Naive thymus-derived CD4-positive, alpha-beta T cell (primary cell): ENCODE measurements at regions of chr3 and their contacts with region 1.

Region 1: GRCh38 chr3:190617185-190617584 is 103.3 kb downstream of the IL1RAP start:
- DNase-seq: peak in 1 of 9 donors; percentile 43
- ATAC-seq: peak; percentile 86
- H3K4me3 ChIP-seq: no peak overlapping the region
- H3K4me3 Mint-ChIP-seq: peak overlapping the region in 1 of 10 donors; percentile 78
- H3K27ac ChIP-seq: no peak overlapping the region
- H3K27ac Mint-ChIP-seq: peak overlapping the region in 1 of 9 donors; percentile 94
- H3K4me1 ChIP-seq: peaks cover 0 to 4% of the 10 kb centered on the region in 2 donors
- H3K4me1 Mint-ChIP-seq: peaks cover 26 to 81% (median 31%) of the 10 kb centered on the region in 7 donors
- H3K27me3 ChIP-seq: no peaks in the 10 kb centered on the region
- H3K27me3 Mint-ChIP-seq: no peaks in the 10 kb centered on the region

Region 2: GRCh38 chr3:190566043-190566933 is 50.9 kb before region 1 on chr3:
- CTCF ChIA-PET with region 1: no interaction called
- POLR2A ChIA-PET with region 1: no interaction called
- intact Hi-C with region 1: loop called in 1 of 2 experiments (anchors 1 kb)
- DNase-seq: peak in 2 of 9 donors; percentile 9 to 73
- ATAC-seq: peak; percentile 89
- H3K4me3 ChIP-seq: no peak overlapping the region
- H3K4me3 Mint-ChIP-seq: peak overlapping the region in 1 of 10 donors; percentile 65
- H3K27ac ChIP-seq: no peak overlapping the region
- H3K27ac Mint-ChIP-seq: peak overlapping the region in 1 of 9 donors; percentile 78
- H3K4me1 ChIP-seq: no peaks in the 10 kb centered on the region
- H3K4me1 Mint-ChIP-seq: peaks cover 0 to 58% (median 0%) of the 10 kb centered on the region in 7 donors
- H3K27me3 ChIP-seq: no peaks in the 10 kb centered on the region
- H3K27me3 Mint-ChIP-seq: no peaks in the 10 kb centered on the region

Region 3: DNA sequence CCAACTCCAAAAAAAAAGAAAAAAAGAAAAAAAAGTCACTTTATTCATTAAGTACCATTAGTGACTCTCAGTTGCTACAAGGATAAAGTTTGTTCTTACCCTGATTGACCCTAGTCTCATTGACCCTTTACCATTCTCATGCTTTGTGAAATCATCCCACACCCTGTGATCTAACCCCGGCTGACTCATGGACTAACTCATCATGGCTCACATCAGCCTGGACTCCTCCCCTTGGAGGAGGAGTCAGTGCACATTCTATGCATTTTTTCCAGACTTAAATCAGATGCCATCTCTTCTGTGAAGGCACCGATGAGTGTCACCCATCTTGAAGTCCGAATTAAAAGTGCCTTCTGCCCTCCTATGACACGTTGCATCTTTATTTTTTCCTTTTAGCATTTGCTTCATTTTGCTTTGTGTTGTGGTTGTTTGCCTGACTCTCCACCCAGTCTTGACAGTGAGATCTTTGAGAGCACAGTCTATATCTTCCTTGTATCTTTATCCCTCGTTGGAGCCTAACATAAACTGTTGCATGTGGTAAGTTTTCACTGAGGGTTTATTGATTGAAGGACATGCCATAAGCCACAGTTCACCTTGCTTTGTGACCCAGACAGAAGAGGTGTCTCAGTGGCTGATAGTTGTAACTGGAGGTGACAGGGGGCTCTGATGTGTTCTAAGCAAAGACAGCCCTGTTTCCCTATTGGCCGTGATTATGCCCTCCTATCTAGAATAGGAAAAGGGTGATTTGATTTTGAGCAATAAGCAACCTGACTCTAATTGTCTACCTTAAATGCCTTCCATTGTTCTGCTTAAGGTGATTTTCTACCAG is 31.2 kb before region 1 on chr3:
- CTCF ChIA-PET with region 1: no interaction called
- POLR2A ChIA-PET with region 1: no interaction called
- intact Hi-C with region 1: loop called in 1 of 2 experiments (anchors 1 kb)
- DNase-seq: peak in 1 of 9 donors; percentile 56
- ATAC-seq: peak; percentile 88
- H3K4me3 ChIP-seq: no peak overlapping the region
- H3K4me3 Mint-ChIP-seq: peak overlapping the region in 4 of 10 donors; percentile 14 to 43 (median 26)
- H3K27ac ChIP-seq: no peak overlapping the region
- H3K27ac Mint-ChIP-seq: peak overlapping the region in 2 of 9 donors; percentile 6 to 84
- H3K4me1 ChIP-seq: peaks cover 4% of the 10 kb centered on the region in 2 donors
- H3K4me1 Mint-ChIP-seq: peaks cover 8 to 50% (median 21%) of the 10 kb centered on the region in 7 donors
- H3K27me3 ChIP-seq: no peaks in the 10 kb centered on the region
- H3K27me3 Mint-ChIP-seq: no peaks in the 10 kb centered on the region

Region 4: GRCh38 chr3:190605385-190605784 is 11.8 kb before region 1 on chr3:
- CTCF ChIA-PET with region 1: no interaction called
- POLR2A ChIA-PET with region 1: no interaction called
- intact Hi-C with region 1: loop called in 1 of 2 experiments (anchors 1 kb)
- DNase-seq: no peak
- ATAC-seq: no peak
- H3K4me3 ChIP-seq: no peak overlapping the region
- H3K4me3 Mint-ChIP-seq: peak overlapping the region in 1 of 10 donors; percentile 7
- H3K27ac ChIP-seq: no peak overlapping the region
- H3K27ac Mint-ChIP-seq: peak overlapping the region in 1 of 9 donors; percentile 35
- H3K4me1 ChIP-seq: no peaks in the 10 kb centered on the region
- H3K4me1 Mint-ChIP-seq: peaks cover 0 to 28% (median 4%) of the 10 kb centered on the region in 7 donors
- H3K27me3 ChIP-seq: no peaks in the 10 kb centered on the region
- H3K27me3 Mint-ChIP-seq: no peaks in the 10 kb centered on the region

Region 5: DNA sequence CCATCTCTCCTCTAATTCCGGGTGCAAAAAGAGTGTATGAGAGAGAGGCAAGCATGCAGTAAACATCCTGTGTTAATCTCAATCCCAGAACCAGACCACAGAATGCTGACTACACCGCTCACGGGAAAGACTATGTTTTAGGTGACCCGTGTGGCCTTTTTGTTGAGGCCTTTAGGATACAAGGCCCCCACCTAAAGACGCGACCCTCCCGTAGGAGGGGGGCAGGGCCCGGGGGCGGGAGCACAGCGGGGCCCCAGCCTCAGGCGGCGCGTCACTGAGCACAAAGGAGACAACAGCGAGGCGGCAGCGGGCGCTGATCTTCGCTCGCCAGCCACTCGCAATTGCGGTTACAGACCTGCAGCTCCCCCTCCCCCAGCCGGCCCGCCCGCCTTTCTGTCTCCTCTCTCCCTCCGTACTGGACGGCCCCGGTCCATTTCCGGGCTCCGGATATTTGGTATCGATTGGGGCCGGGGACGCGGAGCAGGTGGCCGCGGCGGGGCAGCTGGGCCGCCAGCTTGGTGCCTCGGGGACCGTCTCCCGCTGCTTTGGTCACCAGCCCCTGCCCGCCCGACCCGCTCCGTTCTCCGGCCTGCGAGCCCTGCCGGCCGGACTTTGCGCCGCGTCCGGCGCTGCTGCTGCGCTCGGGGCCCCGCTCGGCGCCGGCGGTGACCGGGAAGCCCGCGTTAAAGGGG is 711.9 kb after region 1 on chr3 and contains the start of gene CCDC50:
- CTCF ChIA-PET with region 1: no interaction called
- POLR2A ChIA-PET with region 1: no interaction called
- intact Hi-C with region 1: loop called in 1 of 2 experiments (anchors 5 kb)
- DNase-seq: peak in 7 of 9 donors; percentile 3 to 56 (median 19)
- ATAC-seq: peak; percentile 70
- H3K4me3 ChIP-seq: peak within 1 kb of the TSS; percentile 32
- H3K4me3 Mint-ChIP-seq: peak within 1 kb of the TSS; percentile 47 to 82 (median 76)
- H3K27ac ChIP-seq: peak within 1 kb of the TSS; percentile 44
- H3K27ac Mint-ChIP-seq: peak within 1 kb of the TSS in 4 of 9 donors; percentile 53 to 80 (median 72)
- H3K4me1 ChIP-seq: no peaks in the 10 kb centered on the region
- H3K4me1 Mint-ChIP-seq: peaks cover 0 to 21% (median 13%) of the 10 kb centered on the region in 7 donors
- H3K27me3 ChIP-seq: no peaks in the 10 kb centered on the region
- H3K27me3 Mint-ChIP-seq: peaks cover 22 to 41% (median 31%) of the 10 kb centered on the region in 5 donors
- total RNA-seq, gene CCDC50: 0.92 to 17.9 (median 6.2) TPM